Activated CD8-positive, alpha-beta T cell treated with anti-CD3 and anti-CD28 coated beads, Interleukin-2, amount 10 ng/mL, durations not matched to agents 7 days and 5 days (primary cell): ENCODE measurements at regions of chr14 and their contacts with region 1.

Region 1: DNA sequence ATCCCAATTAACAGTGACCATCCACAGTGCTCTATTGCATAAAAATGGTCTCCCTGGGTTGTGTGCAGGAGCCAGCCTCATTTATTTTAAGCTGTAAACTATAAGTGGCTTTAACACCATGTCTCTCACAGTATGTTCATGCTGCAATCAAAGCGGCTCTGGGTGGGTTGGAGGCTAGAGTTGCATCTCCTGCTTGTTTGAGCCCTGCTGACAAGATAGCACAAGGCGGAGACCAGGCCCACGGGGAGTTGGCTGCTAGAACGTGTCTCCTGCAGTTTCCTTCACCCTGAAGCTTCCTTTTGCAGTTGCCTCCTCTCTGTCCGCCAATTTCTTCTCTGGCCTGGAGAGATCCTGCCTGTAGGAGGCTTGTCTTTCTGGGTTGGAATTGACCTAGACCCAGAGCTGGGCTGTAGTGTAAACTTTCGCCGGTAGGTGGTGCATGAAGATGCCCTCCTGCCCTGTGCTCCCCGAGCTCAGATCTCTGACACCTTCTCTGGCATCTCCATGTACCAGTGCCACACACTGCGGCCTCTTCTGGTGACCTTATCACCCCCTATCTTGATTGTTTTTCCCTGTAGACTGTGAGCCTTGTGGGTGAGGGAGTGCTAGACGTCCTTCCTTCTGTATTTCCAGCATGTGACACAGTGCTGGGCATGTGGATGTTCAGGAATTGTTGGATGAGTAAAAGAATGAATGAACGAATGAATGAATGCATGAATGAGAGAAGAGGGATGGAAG is 10.3 kb downstream of the OTUB2 start:
- DNase-seq: peak; percentile 86
- ATAC-seq: peak; percentile 97
- H3K4me3 Mint-ChIP-seq: no peak overlapping the region
- H3K27ac Mint-ChIP-seq: no peak overlapping the region
- H3K4me1 Mint-ChIP-seq: peaks cover 7% of the 10 kb centered on the region
- H3K27me3 Mint-ChIP-seq: peaks cover 2% of the 10 kb centered on the region

Region 2: DNA sequence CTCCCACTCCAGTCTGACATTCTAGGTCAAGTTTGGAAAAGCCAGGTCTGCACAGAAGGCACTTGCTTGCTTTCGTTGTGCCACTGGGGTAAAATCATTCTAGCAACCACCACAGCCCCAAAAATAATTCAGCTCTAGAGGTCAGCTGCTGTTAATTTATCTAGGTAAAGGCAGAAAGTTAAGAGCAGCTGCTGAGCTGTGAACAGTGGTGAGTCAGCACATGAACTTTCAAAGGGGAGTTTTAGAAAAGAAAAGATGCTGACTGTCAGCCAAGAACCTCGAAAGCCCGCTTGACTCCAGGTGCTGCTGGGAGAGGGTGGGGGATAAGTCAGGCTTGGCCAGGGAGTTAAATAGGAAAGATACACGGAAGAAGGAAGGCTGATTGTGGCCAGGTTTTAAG is 26.7 kb before region 1 on chr14:
- CTCF ChIA-PET with region 1: interaction called, 13 read pairs
- POLR2A ChIA-PET with region 1: interaction called, 3 read pairs
- DNase-seq: no peak
- ATAC-seq: no peak
- H3K4me3 Mint-ChIP-seq: no peak overlapping the region
- H3K27ac Mint-ChIP-seq: no peak overlapping the region
- H3K4me1 Mint-ChIP-seq: peaks cover 62% of the 10 kb centered on the region
- H3K27me3 Mint-ChIP-seq: peaks cover 15% of the 10 kb centered on the region

Region 3: DNA sequence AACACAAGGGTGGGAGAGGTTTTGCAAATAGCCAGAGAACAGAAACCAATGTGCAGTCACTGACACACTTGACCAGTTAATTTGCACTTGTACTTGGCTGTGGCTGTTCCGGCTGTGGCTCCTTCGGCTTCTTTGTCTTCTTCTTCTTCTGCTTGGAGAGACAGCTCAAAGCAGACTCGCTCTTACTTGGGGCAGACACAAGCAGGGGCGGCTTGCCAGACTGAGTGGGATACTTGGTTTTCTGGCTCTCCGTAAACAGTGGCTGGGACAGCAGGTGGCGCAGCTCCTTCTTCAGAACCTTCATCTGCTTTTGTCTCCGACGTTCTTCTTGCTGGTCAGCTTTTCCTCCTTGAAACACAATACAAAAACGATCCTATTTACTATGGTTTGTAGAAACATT is 14.6 kb after region 1 on chr14:
- CTCF ChIA-PET with region 1: interaction called, 52 read pairs
- POLR2A ChIA-PET with region 1: no interaction called
- DNase-seq: no peak
- ATAC-seq: no peak
- H3K4me3 Mint-ChIP-seq: no peak overlapping the region
- H3K27ac Mint-ChIP-seq: peak overlapping the region; percentile 56
- H3K4me1 Mint-ChIP-seq: peaks cover 35% of the 10 kb centered on the region
- H3K27me3 Mint-ChIP-seq: no peaks in the 10 kb centered on the region

Region 4: DNA sequence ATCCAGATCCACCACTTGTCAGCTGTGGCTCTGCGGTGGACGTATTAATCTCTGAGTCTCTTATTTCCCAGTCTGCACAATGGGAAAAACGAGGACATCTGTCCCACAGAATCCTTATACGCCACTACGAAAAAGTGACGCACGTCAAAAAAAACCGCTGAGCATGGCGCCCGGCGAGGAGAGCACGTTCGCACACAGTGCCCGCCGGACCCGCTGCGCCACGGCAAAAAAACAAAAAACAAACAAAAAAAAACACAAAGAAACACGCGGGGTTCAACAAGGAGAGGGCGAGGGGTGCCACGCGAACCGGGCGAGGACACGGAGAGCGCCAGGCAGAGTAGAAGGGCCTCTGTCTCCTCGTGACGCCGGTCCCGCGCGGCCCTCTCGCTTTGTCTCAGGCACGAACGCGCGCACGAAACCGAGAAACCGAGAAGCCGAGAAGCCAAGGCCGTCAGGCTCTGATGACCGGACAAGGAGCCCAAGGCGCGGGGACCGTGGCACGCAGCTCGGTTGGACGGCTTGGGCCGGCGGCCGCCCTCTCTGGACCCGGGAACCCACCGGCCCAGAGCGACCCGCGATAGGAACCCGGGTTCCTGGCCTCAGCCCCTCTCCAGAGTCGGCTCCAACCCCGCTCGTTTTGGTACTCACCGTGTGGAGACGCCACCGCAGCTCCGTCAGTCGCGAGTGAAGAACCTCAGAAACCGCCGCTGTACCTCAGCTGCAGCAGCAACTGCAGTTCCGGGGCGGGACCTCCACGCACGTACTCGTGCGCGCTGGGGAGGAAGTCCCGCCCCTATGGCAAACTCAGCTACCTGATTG is 44.2 kb after region 1 on chr14 and contains the start of gene DDX24:
- CTCF ChIA-PET with region 1: interaction called, 35 read pairs
- POLR2A ChIA-PET with region 1: no interaction called
- DNase-seq: peak; percentile 98
- ATAC-seq: peak; percentile 96
- H3K4me3 Mint-ChIP-seq: peak within 1 kb of the TSS; percentile 99
- H3K27ac Mint-ChIP-seq: peak within 1 kb of the TSS; percentile 99
- H3K4me1 Mint-ChIP-seq: peaks cover 52% of the 10 kb centered on the region
- H3K27me3 Mint-ChIP-seq: no peaks in the 10 kb centered on the region
- total RNA-seq, gene DDX24: 172 to 184 TPM

Region 5: DNA sequence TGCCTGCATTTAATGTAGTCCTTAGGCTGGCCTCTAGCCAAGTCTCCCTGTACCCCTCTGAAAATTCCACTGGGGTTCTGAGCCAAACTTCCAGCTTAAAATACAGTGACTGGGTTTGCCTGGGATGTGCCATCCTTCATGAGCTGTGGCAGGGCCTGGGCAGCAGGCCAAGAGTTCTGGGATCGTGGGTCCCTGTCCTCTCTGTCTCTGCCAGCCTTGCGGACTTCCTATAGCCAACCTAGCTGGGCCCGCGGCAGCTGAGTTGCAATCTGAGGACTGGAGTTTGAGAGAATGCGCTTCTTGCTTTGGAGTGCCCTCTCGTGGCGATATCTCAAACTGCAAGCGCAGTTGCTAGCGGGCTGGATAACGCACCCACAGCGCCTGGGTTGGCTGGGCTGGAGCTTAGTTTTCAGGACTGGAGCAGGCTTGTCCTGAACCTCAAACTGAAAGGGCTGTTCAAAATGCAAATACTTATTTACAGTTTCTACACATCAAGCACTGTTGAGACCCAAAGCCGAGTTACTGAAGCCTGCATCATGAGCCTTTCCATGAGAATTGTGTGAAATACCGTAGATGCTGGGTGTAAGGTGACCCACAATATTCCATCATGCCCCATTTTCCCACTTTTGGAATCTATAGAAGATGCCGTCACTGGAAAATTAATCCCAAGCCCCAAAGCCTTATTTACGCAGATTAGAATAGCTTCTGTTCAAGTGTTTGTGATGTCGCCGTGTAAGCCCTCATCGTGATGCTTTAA is 100.3 kb after region 1 on chr14:
- CTCF ChIA-PET with region 1: interaction called, 108 read pairs
- POLR2A ChIA-PET with region 1: no interaction called
- DNase-seq: peak; percentile 89
- ATAC-seq: peak; percentile 85
- H3K4me3 Mint-ChIP-seq: no peak overlapping the region
- H3K27ac Mint-ChIP-seq: no peak overlapping the region
- H3K4me1 Mint-ChIP-seq: peaks cover 5% of the 10 kb centered on the region
- H3K27me3 Mint-ChIP-seq: peaks cover 21% of the 10 kb centered on the region

Region 6: GRCh38 chr14:94170136-94170535 is 133.7 kb after region 1 on chr14:
- CTCF ChIA-PET with region 1: no interaction called
- POLR2A ChIA-PET with region 1: no interaction called
- DNase-seq: no peak
- ATAC-seq: no peak
- H3K4me3 Mint-ChIP-seq: no peak overlapping the region
- H3K27ac Mint-ChIP-seq: no peak overlapping the region
- H3K4me1 Mint-ChIP-seq: peaks cover 14% of the 10 kb centered on the region
- H3K27me3 Mint-ChIP-seq: peaks cover 46% of the 10 kb centered on the region

Region 7: GRCh38 chr14:94180655-94181271 is 144.3 kb after region 1 on chr14:
- CTCF ChIA-PET with region 1: interaction called, 39 read pairs
- POLR2A ChIA-PET with region 1: no interaction called
- DNase-seq: peak; percentile 27
- ATAC-seq: peak; percentile 87
- H3K4me3 Mint-ChIP-seq: peak overlapping the region; percentile 36
- H3K27ac Mint-ChIP-seq: peak overlapping the region; percentile 0
- H3K4me1 Mint-ChIP-seq: peaks cover 9% of the 10 kb centered on the region
- H3K27me3 Mint-ChIP-seq: peaks cover 50% of the 10 kb centered on the region

Region 8: DNA sequence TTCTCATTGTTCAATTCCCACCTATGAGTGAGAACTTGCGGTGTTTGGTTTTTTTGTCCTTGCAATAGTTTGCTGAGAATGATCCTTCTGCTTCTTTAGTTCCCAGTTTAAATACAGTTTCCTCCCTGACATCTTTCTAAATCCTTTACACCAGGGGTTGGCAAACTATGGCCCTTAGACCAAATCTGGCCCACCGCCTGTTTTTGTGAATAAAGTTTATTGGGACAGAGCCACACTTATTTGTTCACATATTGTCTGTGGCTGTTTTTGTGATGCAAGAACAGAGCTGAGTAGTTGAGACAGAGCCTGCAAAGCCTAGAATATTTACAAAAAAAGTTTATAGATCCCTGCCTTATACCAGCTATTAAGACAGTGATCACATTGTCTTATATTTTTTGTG is 202.9 kb after region 1 on chr14:
- CTCF ChIA-PET with region 1: no interaction called
- POLR2A ChIA-PET with region 1: no interaction called
- DNase-seq: no peak
- ATAC-seq: no peak
- H3K4me3 Mint-ChIP-seq: no peak overlapping the region
- H3K27ac Mint-ChIP-seq: no peak overlapping the region
- H3K4me1 Mint-ChIP-seq: no peaks in the 10 kb centered on the region
- H3K27me3 Mint-ChIP-seq: peaks cover 2% of the 10 kb centered on the region

Region 9: DNA sequence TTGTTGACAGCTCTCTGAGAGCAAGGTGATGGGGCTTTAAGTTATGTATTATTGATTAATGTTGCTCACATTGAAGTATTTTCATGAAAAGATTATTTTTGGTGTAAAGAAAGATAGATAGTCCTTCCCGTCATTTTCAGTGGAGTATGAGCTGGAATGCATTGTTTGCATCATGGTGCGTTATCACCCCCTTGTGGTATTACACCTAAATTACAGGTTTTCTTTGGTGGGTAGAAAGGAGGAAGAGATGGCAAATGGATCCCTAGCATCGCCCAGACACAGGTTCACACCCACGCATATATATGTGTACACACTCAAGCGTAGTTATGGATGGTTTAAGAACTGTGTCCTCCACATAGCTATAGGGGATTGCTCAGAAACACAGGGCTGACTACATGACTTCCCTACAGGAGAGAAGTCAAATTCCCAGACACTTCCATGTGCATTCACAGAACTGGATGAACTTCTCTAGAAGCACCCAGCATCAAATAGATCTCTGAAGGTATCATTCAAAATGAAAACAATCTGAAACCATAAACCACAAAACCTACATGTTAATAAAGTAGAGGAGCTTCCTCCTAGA is 271.0 kb after region 1 on chr14:
- CTCF ChIA-PET with region 1: no interaction called
- POLR2A ChIA-PET with region 1: no interaction called
- DNase-seq: no peak
- ATAC-seq: no peak
- H3K4me3 Mint-ChIP-seq: no peak overlapping the region
- H3K27ac Mint-ChIP-seq: no peak overlapping the region
- H3K4me1 Mint-ChIP-seq: no peaks in the 10 kb centered on the region
- H3K27me3 Mint-ChIP-seq: no peaks in the 10 kb centered on the region